Activated T-helper 1 cell treated with anti-CD3 and anti-CD28 coated beads, Interleukin-12 subunit alpha, Interleukin-12 subunit beta, Interleukin-2, Interleukin-4 antibody, amounts not matched to agents 30 ng/mL and 10 ng/mL and 1 ng/mL, durations not matched to agents 14 hours and 24 hours and 36 hours (primary cell): ENCODE measurements at regions of chrX and their contacts with region 1.

Region 1: GRCh38 chrX:150568320-150569154 is at the start of gene MTM1:
- DNase-seq: peak; percentile 90
- H3K4me3 Mint-ChIP-seq: peak within 1 kb of the TSS; percentile 88
- H3K27ac Mint-ChIP-seq: peak within 1 kb of the TSS; percentile 89
- H3K4me1 Mint-ChIP-seq: peaks cover 47% of the 10 kb centered on the region
- H3K27me3 Mint-ChIP-seq: peaks cover 2% of the 10 kb centered on the region
- total RNA-seq, gene MTM1: 24.1 and 24.3 TPM in 2 replicates

Region 2: GRCh38 chrX:150547375-150548115 is 21.0 kb before region 1 on chrX:
- intact Hi-C with region 1: loop called (anchors 2 kb)
- DNase-seq: no peak
- H3K4me3 Mint-ChIP-seq: peak overlapping the region; percentile 30
- H3K27ac Mint-ChIP-seq: peak overlapping the region; percentile 80
- H3K4me1 Mint-ChIP-seq: peaks cover 26% of the 10 kb centered on the region
- H3K27me3 Mint-ChIP-seq: no peaks in the 10 kb centered on the region

Region 3: DNA sequence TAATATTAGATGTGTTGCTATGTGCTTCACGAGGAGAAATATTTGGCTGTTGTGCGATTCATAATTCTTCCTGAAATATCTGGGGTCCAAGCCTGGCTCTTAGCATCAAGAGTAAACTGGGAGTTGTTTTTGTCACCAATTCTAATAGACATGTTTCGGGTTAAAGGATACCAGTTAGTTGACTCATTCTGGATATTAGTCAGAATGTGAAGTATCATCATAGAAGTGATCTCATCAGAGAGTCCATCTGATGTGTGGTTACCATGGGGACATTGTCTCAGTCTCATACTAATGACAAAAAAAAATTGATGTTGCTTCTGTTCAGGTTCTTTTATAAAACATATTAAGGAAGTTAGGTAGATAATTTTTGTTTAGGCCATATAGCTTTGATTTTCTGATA is 67.4 kb after region 1 on chrX:
- intact Hi-C with region 1: loop called (anchors 2 kb)
- DNase-seq: no peak
- H3K4me3 Mint-ChIP-seq: no peak overlapping the region
- H3K27ac Mint-ChIP-seq: peak overlapping the region; percentile 78
- H3K4me1 Mint-ChIP-seq: peaks cover 7% of the 10 kb centered on the region
- H3K27me3 Mint-ChIP-seq: no peaks in the 10 kb centered on the region

Region 4: DNA sequence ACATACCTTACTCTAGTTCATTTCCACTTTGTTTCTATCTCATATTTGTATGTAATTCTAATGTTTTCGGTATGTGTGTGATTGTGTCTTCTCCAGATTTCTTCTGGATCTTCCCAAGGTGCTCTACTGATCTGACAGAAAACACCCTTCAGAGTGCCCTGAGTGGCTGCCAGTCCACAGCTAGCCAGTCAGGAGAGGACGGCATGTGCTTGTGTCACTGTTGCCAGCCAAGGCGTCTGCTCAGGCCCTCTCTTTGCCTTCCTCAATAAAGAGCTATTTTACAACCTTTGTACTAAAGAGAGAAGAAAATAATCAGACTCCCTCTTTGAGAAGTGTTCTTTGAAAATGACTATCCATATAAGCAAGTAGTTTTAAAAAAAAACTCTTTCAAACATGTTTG is 300.9 kb after region 1 on chrX:
- intact Hi-C with region 1: no loop called
- DNase-seq: no peak
- H3K4me3 Mint-ChIP-seq: no peak overlapping the region
- H3K27ac Mint-ChIP-seq: no peak overlapping the region
- H3K4me1 Mint-ChIP-seq: peaks cover 33% of the 10 kb centered on the region
- H3K27me3 Mint-ChIP-seq: no peaks in the 10 kb centered on the region